Aorta (tissue), 5 donors: ENCODE measurements at regions of chr5 and their contacts with region 1.

Region 1: DNA sequence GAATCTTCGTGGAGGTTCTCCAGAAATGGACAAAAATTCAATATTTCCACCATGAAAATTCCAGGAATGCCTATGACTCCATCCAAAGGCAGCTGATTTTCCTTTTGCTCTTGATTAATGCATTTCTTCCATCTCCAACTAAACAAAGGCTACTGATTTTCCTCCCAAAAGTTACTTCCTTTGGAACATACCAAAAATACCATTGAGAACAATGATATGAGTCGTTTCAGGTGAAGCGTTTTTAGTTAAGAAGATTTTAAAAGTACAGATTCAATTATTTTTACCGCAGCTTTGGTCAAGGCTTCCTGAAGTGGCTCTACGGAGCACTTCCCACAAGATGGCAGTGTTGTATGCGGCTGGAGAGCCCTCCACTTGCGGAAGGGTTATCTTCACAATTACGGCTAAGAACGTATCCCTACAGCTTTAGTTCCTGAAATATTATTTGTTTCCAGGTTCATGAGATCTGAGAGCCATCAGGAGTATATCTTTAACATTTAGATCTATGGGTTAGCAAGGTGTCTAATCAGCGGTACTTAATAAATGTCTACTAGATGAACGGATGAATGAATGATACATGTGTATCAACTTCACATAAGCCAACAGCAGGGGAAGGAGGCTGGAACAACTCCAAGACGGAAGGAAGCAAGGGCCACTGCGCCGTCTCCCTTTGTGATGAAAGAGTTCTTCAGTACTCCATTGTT is 35.9 kb upstream of the ARSB start:
- DNase-seq: peak in 1 of 2 donors; percentile 66
- ATAC-seq: peak; percentile 87
- H3K4me3 ChIP-seq: peak overlapping the region in 1 of 2 donors; percentile 34
- H3K27ac ChIP-seq: no peak overlapping the region
- H3K4me1 ChIP-seq: peaks cover 0 to 2% of the 10 kb centered on the region in 2 donors
- H3K27me3 ChIP-seq: no peaks in the 10 kb centered on the region

Region 2: GRCh38 chr5:79133657-79134451 is 112.8 kb after region 1 on chr5:
- intact Hi-C with region 1: loop called (anchors 1 kb)
- DNase-seq: peak; percentile 74 to 87
- ATAC-seq: peak; percentile 88
- H3K4me3 ChIP-seq: peak overlapping the region; percentile 29 to 60
- H3K27ac ChIP-seq: peak overlapping the region; percentile 69
- H3K4me1 ChIP-seq: no peaks in the 10 kb centered on the region
- H3K27me3 ChIP-seq: no peaks in the 10 kb centered on the region

Region 3: GRCh38 chr5:79464695-79465332 is 443.8 kb after region 1 on chr5:
- intact Hi-C with region 1: loop called (anchors 5 kb)
- DNase-seq: no peak
- ATAC-seq: no peak
- H3K4me3 ChIP-seq: no peak overlapping the region
- H3K27ac ChIP-seq: no peak overlapping the region
- H3K4me1 ChIP-seq: no peaks in the 10 kb centered on the region
- H3K27me3 ChIP-seq: no peaks in the 10 kb centered on the region